ENCODE measurements at regions of chr2 and their contacts with region 1.

Region 1: GRCh38 chr2:72325592-72326422 is 178.1 kb upstream of the CYP26B1 start:
- DNase-seq: no peak
- H3K4me3 ChIP-seq: no peak overlapping the region
- H3K27ac ChIP-seq: no peak overlapping the region
- H3K27me3 ChIP-seq: no peaks in the 10 kb centered on the region
- CTCF ChIP-seq: peak; percentile 69

Region 2: DNA sequence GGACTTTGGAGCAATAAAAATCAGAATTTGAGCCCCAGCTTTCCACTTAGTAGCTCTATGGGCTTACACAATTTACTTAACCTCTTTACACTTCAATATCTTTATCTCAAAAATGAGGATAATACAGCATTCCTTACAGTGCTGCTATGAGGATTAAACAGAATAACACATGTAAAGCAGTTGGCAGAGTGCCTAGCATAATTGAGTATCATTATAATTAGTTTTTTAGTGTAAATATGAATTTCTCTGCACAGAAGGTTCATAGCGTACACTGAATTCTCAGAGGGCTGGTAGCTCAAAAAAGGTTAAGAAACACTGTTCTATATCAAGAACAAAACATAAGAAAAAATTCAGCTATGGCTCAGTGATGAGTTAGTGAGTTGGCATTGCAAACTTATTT is 12.3 kb after region 1 on chr2:
- CTCF ChIA-PET with region 1: interaction called, 11 read pairs
- POLR2A ChIA-PET with region 1: no interaction called
- DNase-seq: no peak
- H3K4me3 ChIP-seq: no peak overlapping the region
- H3K27ac ChIP-seq: no peak overlapping the region
- H3K27me3 ChIP-seq: no peaks in the 10 kb centered on the region
- CTCF ChIP-seq: no peak

Measured in AG04450 (cell line).